H1 (cell line): ENCODE measurements at regions of chr5 and their contacts with region 1.

Region 1: GRCh38 chr5:112707187-112708102 is 30.2 kb upstream of the APC start:
- DNase-seq: peak; percentile 92 to 97
- H3K4me3 ChIP-seq: peak overlapping the region; percentile 81 to 90 (median 84)
- H3K27ac ChIP-seq: peak overlapping the region; percentile 88
- H3K4me1 ChIP-seq: peaks cover 0 to 3% (median 0%) of the 10 kb centered on the region in 4 experiments; a peak in 2 of 7 replicates
- H3K27me3 ChIP-seq: no peaks in the 10 kb centered on the region
- CTCF ChIP-seq: no peak
- EP300 ChIP-seq: no peak
- POLR2A ChIP-seq: peak; percentile 88 to 99
- RAD21 ChIP-seq: no peak

Region 2: DNA sequence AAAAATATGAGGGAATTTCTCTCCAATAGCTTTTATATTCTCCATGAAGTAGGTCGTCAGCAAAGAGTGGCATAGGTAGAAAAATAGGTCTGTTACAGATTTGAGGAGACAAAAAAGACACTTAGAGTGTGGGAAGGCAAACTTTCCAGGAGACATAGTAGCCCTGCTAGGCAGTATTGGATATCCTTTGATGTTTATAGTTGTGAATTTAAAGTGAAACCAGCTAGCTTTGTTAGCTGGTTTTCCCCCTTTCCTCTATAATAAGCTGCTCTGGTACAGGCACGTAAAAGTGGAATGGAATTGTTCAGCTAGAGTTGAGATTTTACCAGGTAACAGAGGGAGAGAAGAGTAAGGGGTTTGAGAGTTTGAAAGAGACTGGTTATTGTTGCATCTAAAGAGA is 13.1 kb after region 1 on chr5:
- CTCF ChIA-PET with region 1: interaction called, 18 read pairs
- POLR2A ChIA-PET with region 1: interaction called, 5 read pairs
- DNase-seq: no peak
- H3K4me3 ChIP-seq: no peak overlapping the region
- H3K27ac ChIP-seq: no peak overlapping the region
- H3K4me1 ChIP-seq: peaks cover 0 to 6% (median 3%) of the 10 kb centered on the region in 4 experiments; a peak in 2 of 7 replicates
- H3K27me3 ChIP-seq: peaks cover 0 to 1% (median 0%) of the 10 kb centered on the region in 4 experiments; a peak in 1 of 7 replicates
- CTCF ChIP-seq: no peak
- EP300 ChIP-seq: no peak
- POLR2A ChIP-seq: no peak
- RAD21 ChIP-seq: no peak

Region 3: DNA sequence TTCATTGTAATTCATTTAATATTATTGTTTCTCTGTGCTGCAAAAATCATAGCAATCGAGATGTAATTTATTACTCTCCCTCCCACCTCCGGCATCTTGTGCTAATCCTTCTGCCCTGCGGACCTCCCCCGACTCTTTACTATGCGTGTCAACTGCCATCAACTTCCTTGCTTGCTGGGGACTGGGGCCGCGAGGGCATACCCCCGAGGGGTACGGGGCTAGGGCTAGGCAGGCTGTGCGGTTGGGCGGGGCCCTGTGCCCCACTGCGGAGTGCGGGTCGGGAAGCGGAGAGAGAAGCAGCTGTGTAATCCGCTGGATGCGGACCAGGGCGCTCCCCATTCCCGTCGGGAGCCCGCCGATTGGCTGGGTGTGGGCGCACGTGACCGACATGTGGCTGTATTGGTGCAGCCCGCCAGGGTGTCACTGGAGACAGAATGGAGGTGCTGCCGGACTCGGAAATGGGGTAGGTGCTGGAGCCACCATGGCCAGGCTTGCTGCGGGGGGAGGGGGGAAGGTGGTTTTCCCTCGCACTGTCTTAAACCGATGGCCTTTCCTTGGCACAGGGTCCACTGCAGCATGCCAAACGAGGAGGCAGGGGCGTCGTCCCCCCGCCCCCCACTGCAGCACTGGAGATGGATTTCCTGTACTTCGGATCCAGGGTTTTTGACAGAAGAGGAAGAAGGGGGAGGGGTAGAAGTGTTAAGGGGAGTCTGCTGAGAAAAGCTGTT is 30.2 kb after region 1 on chr5 and contains the start of gene APC:
- CTCF ChIA-PET with region 1: interaction called, 11 read pairs
- POLR2A ChIA-PET with region 1: interaction called, 7 read pairs
- DNase-seq: peak; percentile 63 to 94
- H3K4me3 ChIP-seq: peak within 1 kb of the TSS; percentile 51 to 94 (median 76)
- H3K27ac ChIP-seq: peak within 1 kb of the TSS; percentile 78
- H3K4me1 ChIP-seq: peaks cover 2 to 8% (median 2%) of the 10 kb centered on the region in 4 experiments; a peak in 4 of 7 replicates
- H3K27me3 ChIP-seq: no peaks in the 10 kb centered on the region
- CTCF ChIP-seq: no peak
- EP300 ChIP-seq: no peak
- POLR2A ChIP-seq: no peak
- RAD21 ChIP-seq: no peak
- total RNA-seq, gene APC: 41.9 and 44.0 TPM in 2 replicates

Region 4: DNA sequence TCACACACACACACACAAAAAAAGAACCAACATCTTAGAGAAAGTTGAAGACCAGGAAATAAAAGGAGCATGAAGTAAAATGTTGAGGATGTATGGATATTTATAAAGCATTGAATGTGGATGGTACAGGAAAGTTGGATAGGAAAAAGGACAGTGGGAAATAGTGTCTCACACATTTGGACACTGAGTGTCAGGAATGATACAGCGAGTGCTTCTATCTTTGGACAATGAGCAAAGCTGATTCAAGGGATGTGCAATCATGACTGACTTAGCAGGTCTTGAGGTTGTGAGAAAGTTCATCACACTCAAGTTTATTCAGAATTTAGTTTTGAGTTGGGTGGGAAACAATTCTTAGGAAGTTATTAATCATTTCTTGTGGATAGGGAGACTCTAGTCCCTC is 103.6 kb after region 1 on chr5:
- CTCF ChIA-PET with region 1: no interaction called
- POLR2A ChIA-PET with region 1: no interaction called
- DNase-seq: no peak
- H3K4me3 ChIP-seq: no peak overlapping the region
- H3K27ac ChIP-seq: no peak overlapping the region
- H3K4me1 ChIP-seq: no peaks in the 10 kb centered on the region
- H3K27me3 ChIP-seq: no peaks in the 10 kb centered on the region
- CTCF ChIP-seq: no peak
- EP300 ChIP-seq: no peak
- POLR2A ChIP-seq: no peak
- RAD21 ChIP-seq: no peak